KBM-7 (cell line): ENCODE measurements at regions of chr4 and their contacts with region 1.

Region 1: GRCh38 chr4:42568610-42569207 is 88.2 kb downstream of the ATP8A1 start:
- DNase-seq: peak; percentile 68

Region 2: DNA sequence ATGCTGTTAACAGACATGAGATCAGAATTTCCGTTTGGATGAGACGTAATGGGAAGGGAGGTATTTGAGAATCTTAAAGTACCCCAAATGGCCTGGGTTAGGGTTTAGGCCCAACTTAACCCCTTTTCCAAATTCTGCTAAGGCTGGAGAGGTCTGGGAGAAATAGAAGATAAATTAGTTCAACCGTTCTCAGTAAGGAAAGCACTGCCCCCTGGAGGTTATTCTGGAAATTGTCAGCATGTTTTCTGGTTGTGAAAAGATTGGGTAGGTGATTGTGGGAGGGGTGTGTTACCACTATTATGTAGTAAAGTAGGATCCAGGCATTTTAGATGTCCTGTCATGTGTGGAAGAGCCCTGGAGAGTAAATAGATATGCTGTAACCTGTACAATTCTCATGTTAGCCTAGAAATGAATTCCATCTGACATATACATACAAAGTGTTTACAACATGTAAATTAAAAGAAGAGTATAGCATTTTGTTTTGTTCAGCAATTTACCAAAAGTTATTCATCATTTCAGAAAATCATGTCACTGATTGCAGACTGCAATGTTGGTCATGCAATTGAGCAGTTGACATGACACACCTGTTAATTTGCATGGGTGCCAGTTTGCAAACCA is 297.0 kb after region 1 on chr4:
- in situ Hi-C with region 1: loop called (anchors 25 kb)
- DNase-seq: peak; percentile 79